ENCODE measurements at regions of chr5 and their contacts with region 1.

Region 1: GRCh38 chr5:149381987-149382340 is 2.9 kb upstream of the IL17B start:
- DNase-seq: peak; percentile 93
- ATAC-seq: peak; percentile 91
- H3K4me3 Mint-ChIP-seq: no peak overlapping the region
- H3K27ac Mint-ChIP-seq: no peak overlapping the region
- H3K4me1 Mint-ChIP-seq: peaks cover 12% of the 10 kb centered on the region
- H3K27me3 Mint-ChIP-seq: no peaks in the 10 kb centered on the region
- CTCF ChIP-seq: peak; percentile 92

Region 2: DNA sequence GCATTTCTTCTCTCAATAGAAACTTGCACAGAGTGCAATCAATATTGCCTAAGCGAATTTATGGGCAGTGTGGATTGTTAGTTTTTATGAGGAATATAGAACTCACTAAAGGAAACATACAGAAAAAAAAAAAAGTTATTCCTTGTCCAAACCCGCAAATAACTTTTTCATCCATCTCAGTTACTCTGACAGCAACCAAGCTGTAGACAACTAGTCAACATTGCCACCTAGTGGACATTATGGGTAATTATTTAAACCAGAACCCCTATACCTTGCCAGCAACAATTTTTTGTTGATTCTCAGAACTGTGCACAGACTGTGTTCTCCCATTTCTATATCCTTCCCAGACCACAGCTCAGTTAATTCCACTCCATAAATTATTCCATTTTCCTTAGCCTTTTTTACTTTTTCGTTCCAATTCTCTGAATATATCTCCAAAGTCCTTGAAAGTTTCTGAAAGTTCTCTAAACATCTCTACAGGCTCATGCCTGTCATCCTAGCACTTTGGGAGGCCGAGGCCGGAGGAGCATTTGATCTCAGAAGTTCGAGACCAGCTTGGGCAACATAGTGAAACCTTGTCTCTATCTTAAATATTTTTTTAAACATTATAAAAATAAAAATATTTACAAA is 112.9 kb before region 1 on chr5:
- CTCF ChIA-PET with region 1: no interaction called
- POLR2A ChIA-PET with region 1: no interaction called
- DNase-seq: no peak
- ATAC-seq: 0 out of 2 replicates have a peak, but pooled peaks have one; percentile 4
- H3K4me3 Mint-ChIP-seq: no peak overlapping the region
- H3K27ac Mint-ChIP-seq: no peak overlapping the region
- H3K4me1 Mint-ChIP-seq: peaks cover 33% of the 10 kb centered on the region
- H3K27me3 Mint-ChIP-seq: peaks cover 51% of the 10 kb centered on the region
- CTCF ChIP-seq: peak; percentile 85

Region 3: DNA sequence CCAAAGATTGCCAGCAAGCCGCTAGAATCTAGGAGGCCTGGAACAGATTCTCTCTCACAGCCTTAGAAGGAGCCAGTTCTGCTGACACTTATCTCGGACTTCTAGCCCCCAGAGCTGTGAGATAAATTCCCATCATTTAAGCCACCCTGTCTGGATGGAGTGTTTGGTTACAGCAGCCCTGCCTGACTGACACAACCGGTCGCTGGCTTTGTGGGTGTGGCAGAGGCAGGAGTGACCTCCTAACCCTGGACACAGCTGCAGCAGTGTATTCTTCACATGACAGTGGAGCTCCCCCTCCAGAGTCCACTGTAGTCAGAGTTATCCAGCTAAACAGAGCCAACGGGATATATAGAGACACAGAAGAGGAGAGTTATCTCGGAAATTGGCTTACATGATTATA is 18.3 kb after region 1 on chr5:
- CTCF ChIA-PET with region 1: interaction called, 12 read pairs
- POLR2A ChIA-PET with region 1: no interaction called
- DNase-seq: no peak
- ATAC-seq: no peak
- H3K4me3 Mint-ChIP-seq: no peak overlapping the region
- H3K27ac Mint-ChIP-seq: no peak overlapping the region
- H3K4me1 Mint-ChIP-seq: peaks cover 13% of the 10 kb centered on the region
- H3K27me3 Mint-ChIP-seq: no peaks in the 10 kb centered on the region; the same call in 1 of the 2 replicates
- CTCF ChIP-seq: no peak

Region 4: GRCh38 chr5:149406203-149406978 is 24.4 kb after region 1 on chr5:
- CTCF ChIA-PET with region 1: interaction called, 28 read pairs
- POLR2A ChIA-PET with region 1: no interaction called
- DNase-seq: peak; percentile 41
- ATAC-seq: peak; percentile 62
- H3K4me3 Mint-ChIP-seq: no peak overlapping the region
- H3K27ac Mint-ChIP-seq: 0 out of 2 replicates have a peak overlapping the region, but pooled peaks have one; percentile 60
- H3K4me1 Mint-ChIP-seq: peaks cover 43% of the 10 kb centered on the region
- H3K27me3 Mint-ChIP-seq: no peaks in the 10 kb centered on the region; the same call in 1 of the 2 replicates
- CTCF ChIP-seq: no peak

Region 5: GRCh38 chr5:149422366-149423048 is 40.5 kb after region 1 on chr5:
- CTCF ChIA-PET with region 1: interaction called, 15 read pairs
- POLR2A ChIA-PET with region 1: interaction called, 7 read pairs
- DNase-seq: peak; percentile 49
- ATAC-seq: peak; percentile 43
- H3K4me3 Mint-ChIP-seq: no peak overlapping the region
- H3K27ac Mint-ChIP-seq: no peak overlapping the region
- H3K4me1 Mint-ChIP-seq: peaks cover 46% of the 10 kb centered on the region
- H3K27me3 Mint-ChIP-seq: no peaks in the 10 kb centered on the region
- CTCF ChIP-seq: no peak

Region 6: GRCh38 chr5:149561848-149562247 is 179.9 kb after region 1 on chr5:
- CTCF ChIA-PET with region 1: interaction called, 14 read pairs
- POLR2A ChIA-PET with region 1: no interaction called
- DNase-seq: no peak
- ATAC-seq: peak; percentile 58
- H3K4me3 Mint-ChIP-seq: no peak overlapping the region
- H3K27ac Mint-ChIP-seq: peak overlapping the region; percentile 94
- H3K4me1 Mint-ChIP-seq: peaks cover 38% of the 10 kb centered on the region
- H3K27me3 Mint-ChIP-seq: no peaks in the 10 kb centered on the region
- CTCF ChIP-seq: no peak

Measured in WTC11 (cell line).